Head of caudate nucleus (tissue), 42 donors: ENCODE measurements at regions of chr1 and their contacts with region 1.

Region 1: GRCh38 chr1:21659099-21659923 is 9.8 kb downstream of the RAP1GAP start:
- DNase-seq: peak; percentile 69 to 95 (median 86)

Region 2: GRCh38 chr1:21255278-21255942 is 403.9 kb before region 1 on chr1:
- intact Hi-C with region 1: loop called (anchors 10 kb)
- DNase-seq: peak; percentile 79 to 99 (median 96)

Region 3: DNA sequence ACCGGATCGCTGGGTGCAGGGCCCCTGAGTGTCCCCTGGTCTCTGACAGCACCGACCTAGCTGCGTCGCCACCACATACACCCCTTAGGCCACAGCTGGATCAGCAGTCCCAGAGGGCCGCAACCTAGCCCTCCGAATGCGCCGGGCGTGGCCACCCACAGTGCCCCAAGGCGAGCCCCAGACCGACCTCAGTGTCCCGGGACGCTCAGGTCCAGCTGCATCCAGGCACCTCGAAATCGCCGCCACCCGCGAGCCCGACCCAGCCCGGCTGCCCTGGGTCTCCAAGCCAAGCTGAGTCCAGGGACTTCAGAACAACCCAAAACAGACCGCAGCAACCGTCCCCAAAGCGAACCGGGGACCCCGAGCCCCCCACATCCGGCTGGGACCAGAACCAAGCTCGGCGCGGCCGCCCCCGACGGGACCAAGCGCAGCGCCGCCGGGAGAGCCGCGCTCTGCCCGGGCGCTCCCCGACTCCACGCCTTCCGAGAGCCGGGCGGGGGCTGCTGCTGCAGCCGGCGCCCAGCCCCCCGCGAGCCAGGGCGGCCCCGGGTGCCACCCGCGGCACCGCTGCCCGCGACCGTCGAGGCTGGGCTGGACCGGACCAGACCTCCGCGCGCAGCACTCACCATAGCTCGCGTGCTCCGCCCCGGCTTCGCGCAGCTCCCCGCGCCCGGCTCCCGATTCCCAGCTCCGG is 314.4 kb before region 1 on chr1:
- intact Hi-C with region 1: loop called (anchors 10 kb)
- DNase-seq: peak in 5 of 42 donors; percentile 24 to 48 (median 41)

Region 4: DNA sequence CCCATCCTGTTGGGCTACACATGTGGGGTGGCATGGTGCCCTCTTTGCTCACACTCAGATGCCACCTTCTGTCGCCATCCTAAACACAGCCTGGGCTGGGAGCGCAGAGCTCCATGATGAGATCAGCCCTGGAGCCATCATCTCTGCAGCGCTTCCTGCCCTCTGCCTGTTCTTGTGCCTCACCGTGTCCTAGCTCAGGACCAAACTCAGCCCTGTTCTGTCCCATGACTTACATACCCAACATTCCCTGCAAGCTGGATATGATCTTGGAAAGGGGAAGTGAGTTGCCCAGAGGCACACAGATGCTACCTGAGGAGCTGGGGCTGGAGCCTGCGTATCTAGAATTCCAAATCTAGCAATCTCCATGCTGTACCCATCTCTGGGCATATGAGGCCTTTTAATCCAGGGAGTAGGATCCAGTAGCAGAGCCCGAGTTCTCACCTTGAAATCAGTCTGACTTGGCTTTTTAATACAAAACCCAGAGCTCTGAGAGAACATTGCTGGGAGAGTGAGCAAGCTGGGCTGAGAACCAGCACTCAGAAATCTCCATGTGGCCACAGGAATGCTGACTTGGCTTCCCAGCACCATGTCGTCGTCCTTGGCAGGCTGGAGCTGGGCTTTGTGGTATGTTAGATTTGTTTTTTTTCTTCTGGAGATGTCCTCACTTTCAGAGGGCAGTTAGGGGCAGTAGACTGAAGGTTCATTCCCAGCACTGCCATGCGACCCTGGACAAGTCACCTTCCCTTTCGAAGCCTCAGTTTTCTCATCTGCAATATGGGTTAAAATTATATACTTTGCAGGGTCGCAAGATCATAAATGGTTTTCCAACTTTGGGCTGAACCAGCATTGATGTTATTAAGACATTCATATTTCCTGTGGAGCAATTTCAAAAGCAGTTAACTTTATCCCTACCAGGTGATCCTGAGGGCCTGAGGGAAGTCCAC is 147.5 kb before region 1 on chr1:
- intact Hi-C with region 1: loop called (anchors 2 kb)
- DNase-seq: peak in 4 of 42 donors; percentile 16 to 59 (median 27)

Region 5: DNA sequence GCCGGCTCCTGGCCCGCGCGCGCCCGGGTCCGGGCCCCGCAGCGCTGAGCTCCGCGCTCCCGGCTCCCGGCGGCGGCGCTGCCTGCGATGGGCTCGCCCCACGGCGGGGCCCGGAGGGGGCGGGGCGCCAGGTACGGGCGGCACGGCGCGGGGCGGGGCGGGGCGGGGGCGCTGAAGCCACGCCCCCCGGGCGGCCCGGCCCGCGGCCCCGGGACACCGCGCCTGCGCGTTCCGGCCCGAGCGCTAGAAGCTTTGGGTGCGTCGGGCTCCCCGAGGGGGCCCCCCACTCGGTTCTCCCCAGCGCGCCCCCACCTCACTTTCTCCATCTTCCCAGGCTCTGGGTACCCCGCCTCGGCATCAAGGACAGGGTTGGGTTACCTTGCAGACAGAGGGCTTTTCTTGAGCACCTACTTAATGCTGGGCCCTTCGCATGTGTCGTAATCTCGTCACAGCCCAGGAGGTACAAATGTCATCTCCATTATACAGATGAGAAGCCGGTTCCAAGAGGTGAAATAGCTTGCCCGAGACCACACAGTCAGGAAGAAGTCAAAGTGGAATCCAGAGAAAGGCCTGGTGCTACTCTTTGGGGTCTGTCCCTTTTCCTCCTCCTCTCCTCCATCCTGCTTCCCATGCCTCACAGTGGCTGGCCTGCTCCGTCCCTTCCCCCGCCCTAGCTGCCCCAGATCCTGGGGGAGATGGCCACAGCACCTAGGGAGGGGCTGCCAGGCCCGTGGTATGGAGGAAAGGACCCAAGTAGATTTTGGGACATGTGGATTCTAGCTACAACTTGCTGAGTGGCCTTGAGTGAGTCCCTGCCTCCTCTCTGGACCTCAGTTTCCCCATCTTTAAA is 36.6 kb before region 1 on chr1:
- intact Hi-C with region 1: loop called (anchors 5 kb)
- DNase-seq: peak in 18 of 42 donors; percentile 22 to 71 (median 50)